Activated CD4-positive, alpha-beta memory T cell treated with anti-CD3 and anti-CD28 coated beads, Interleukin-2, amount 10 ng/mL, durations not matched to agents 7 days and 5 days (primary cell): ENCODE measurements at regions of chr1 and their contacts with region 1.

Region 1: GRCh38 chr1:24930204-24931145 is at the start of gene RUNX3:
- DNase-seq: peak; percentile 94
- H3K4me3 Mint-ChIP-seq: peak within 1 kb of the TSS; percentile 81
- H3K27ac Mint-ChIP-seq: peak within 1 kb of the TSS; percentile 80
- H3K4me1 Mint-ChIP-seq: peaks cover 65% of the 10 kb centered on the region
- H3K27me3 Mint-ChIP-seq: no peaks in the 10 kb centered on the region
- total RNA-seq, gene RUNX3: 177 to 183 TPM

Region 2: DNA sequence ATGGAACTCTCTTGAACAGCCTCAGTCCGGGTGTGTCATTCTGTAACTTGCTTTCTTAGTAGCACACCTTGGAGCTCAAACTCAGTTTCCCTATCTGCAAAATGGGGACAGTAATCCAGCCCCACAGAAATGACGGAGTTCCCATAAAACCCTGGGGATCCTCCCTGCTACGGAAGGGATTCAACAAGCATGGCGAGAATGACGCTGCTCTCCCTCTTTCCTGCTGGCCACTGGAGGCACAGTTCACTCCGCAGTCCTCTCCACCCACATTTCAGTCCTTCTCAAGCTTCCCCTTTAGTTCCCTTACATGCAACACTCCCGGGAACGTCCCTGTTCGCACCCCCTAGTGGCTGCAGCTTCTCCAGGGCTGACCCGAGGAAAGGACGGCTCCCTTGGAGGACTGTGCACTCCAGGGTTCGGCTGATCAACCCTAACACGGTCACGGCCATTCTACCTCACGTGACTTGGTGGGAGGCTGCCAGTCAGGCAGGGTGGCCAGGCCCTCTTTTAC is 21.0 kb before region 1 on chr1:
- CTCF ChIA-PET with region 1: interaction called, 5 read pairs
- POLR2A ChIA-PET with region 1: interaction called, 128 read pairs
- DNase-seq: no peak
- H3K4me3 Mint-ChIP-seq: no peak overlapping the region
- H3K27ac Mint-ChIP-seq: peak overlapping the region; percentile 96
- H3K4me1 Mint-ChIP-seq: peaks cover 62% of the 10 kb centered on the region
- H3K27me3 Mint-ChIP-seq: no peaks in the 10 kb centered on the region

Region 3: GRCh38 chr1:24946861-24947658 is 16.6 kb after region 1 on chr1:
- CTCF ChIA-PET with region 1: interaction called, 22 read pairs
- POLR2A ChIA-PET with region 1: interaction called, 105 read pairs
- DNase-seq: no peak
- H3K4me3 Mint-ChIP-seq: no peak overlapping the region
- H3K27ac Mint-ChIP-seq: no peak overlapping the region
- H3K4me1 Mint-ChIP-seq: peaks cover 77% of the 10 kb centered on the region
- H3K27me3 Mint-ChIP-seq: no peaks in the 10 kb centered on the region

Region 4: DNA sequence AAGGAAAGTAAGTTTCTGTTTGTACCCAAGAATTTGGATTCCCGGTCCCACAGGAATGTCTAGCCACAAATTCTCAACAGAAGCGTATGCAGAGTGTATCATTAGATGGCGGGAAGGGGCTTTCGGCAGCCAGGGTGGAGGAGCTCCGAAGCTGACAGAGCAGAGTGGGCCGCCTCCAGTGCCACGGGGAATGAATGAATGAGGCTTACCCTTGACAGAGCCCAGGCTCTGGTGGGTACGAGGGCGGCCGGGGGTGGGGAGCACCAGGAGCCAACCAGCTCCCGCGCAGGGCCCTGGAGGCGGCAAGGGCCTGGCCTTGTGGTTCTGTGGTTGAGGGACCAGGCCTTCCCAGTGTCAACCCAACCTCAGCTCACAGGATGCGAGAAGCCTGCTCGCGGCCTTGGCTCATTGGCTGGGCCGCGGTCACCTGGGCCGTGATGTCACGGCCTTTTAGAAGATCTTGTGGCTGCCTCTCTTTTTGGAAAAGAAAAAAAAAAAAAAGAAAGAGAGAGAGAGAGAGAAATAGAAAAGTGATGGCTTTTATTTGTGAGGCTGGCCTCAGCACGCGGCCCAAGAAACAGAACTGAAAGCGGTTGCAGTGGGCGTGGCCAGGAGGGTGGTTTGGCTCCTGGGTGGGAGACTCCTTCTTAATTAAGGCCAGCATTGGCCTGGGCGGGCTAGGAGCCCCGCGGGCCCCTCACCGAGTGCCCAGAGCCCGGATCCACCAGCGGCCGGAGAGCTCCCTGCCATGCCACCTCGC is 34.5 kb after region 1 on chr1:
- CTCF ChIA-PET with region 1: interaction called, 22 read pairs
- POLR2A ChIA-PET with region 1: interaction called, 86 read pairs
- DNase-seq: peak; percentile 98
- H3K4me3 Mint-ChIP-seq: peak overlapping the region; percentile 95
- H3K27ac Mint-ChIP-seq: peak overlapping the region; percentile 94
- H3K4me1 Mint-ChIP-seq: peaks cover 80% of the 10 kb centered on the region
- H3K27me3 Mint-ChIP-seq: no peaks in the 10 kb centered on the region

Region 5: GRCh38 chr1:25009671-25010262 is 79.3 kb after region 1 on chr1:
- CTCF ChIA-PET with region 1: no interaction called
- POLR2A ChIA-PET with region 1: no interaction called
- DNase-seq: peak; percentile 60
- H3K4me3 Mint-ChIP-seq: no peak overlapping the region
- H3K27ac Mint-ChIP-seq: peak overlapping the region; percentile 32
- H3K4me1 Mint-ChIP-seq: peaks cover 55% of the 10 kb centered on the region
- H3K27me3 Mint-ChIP-seq: peaks cover 6% of the 10 kb centered on the region

Region 6: GRCh38 chr1:25031966-25032667 is 101.6 kb after region 1 on chr1:
- CTCF ChIA-PET with region 1: interaction called, 55 read pairs
- POLR2A ChIA-PET with region 1: interaction called, 44 read pairs
- DNase-seq: peak; percentile 70
- H3K4me3 Mint-ChIP-seq: peak overlapping the region; percentile 72
- H3K27ac Mint-ChIP-seq: peak overlapping the region; percentile 93
- H3K4me1 Mint-ChIP-seq: peaks cover 73% of the 10 kb centered on the region
- H3K27me3 Mint-ChIP-seq: no peaks in the 10 kb centered on the region

Region 7: DNA sequence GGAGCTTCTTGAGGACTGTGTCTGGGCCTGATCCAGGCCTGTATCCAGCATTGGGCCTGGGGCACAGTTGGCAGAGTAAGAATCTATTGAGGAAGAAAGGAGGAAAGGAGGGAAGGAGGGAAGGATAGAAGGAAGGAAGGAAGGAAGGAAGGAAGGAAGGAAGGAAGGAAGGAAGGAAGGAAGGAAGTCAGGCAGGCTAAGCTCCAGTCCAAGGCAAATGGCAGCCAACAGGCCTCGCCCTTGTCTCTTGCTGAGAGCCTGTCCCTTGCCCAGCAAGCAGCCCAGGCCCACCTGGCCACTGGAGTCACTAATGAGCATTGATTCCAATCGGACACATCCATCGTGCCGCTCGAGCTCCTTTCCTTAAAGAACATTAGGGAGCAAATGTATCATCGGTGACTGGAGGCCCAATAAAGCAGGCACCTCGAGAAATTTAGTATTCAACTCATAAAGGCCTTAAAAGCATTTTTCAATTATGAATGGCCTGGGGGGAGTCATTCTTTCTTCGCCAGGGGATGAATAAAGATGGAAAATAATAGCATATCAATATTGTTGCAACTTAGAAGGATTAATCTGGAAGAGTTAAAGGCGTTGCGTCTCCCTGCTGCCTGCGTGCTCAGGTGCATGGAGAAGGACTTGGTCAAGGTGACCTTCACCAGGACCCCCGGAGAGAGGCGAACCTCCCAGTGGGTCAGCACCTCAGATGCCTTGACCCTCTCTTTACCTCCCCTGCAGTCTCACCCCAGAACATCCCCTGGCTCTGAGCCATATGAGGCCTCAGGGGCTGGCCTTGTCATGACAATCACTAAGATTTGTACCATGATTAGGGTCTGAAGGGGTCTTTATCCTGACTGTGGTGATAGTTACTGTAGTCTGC is 144.1 kb after region 1 on chr1:
- CTCF ChIA-PET with region 1: no interaction called
- POLR2A ChIA-PET with region 1: no interaction called
- DNase-seq: no peak
- H3K4me3 Mint-ChIP-seq: no peak overlapping the region
- H3K27ac Mint-ChIP-seq: no peak overlapping the region
- H3K4me1 Mint-ChIP-seq: no peaks in the 10 kb centered on the region
- H3K27me3 Mint-ChIP-seq: peaks cover 11% of the 10 kb centered on the region

Region 8: GRCh38 chr1:25099343-25099951 is 169.0 kb after region 1 on chr1:
- CTCF ChIA-PET with region 1: interaction called, 31 read pairs
- POLR2A ChIA-PET with region 1: interaction called, 52 read pairs
- DNase-seq: peak; percentile 54
- H3K4me3 Mint-ChIP-seq: no peak overlapping the region
- H3K27ac Mint-ChIP-seq: peak overlapping the region; percentile 71
- H3K4me1 Mint-ChIP-seq: peaks cover 73% of the 10 kb centered on the region
- H3K27me3 Mint-ChIP-seq: peaks cover 24% of the 10 kb centered on the region